Heart left ventricle (tissue), 16 donors: ENCODE measurements at regions of chr3 and their contacts with region 1.

Region 1: GRCh38 chr3:50687127-50687751 is 12.5 kb downstream of the DOCK3 start:
- DNase-seq: peak in 1 of 5 donors; percentile 42
- ATAC-seq: peak; percentile 89 to 95 (median 92)
- H3K4me3 ChIP-seq: no peak overlapping the region
- H3K27ac ChIP-seq: peak overlapping the region in 8 of 12 donors; percentile 4 to 65 (median 44)
- H3K4me1 ChIP-seq: peaks cover 0 to 8% (median 0%) of the 10 kb centered on the region in 12 donors
- H3K27me3 ChIP-seq: peaks cover 0 to 13% (median 0%) of the 10 kb centered on the region in 9 donors
- CTCF ChIP-seq: no peak
- POLR2A ChIP-seq: no peak

Region 2: DNA sequence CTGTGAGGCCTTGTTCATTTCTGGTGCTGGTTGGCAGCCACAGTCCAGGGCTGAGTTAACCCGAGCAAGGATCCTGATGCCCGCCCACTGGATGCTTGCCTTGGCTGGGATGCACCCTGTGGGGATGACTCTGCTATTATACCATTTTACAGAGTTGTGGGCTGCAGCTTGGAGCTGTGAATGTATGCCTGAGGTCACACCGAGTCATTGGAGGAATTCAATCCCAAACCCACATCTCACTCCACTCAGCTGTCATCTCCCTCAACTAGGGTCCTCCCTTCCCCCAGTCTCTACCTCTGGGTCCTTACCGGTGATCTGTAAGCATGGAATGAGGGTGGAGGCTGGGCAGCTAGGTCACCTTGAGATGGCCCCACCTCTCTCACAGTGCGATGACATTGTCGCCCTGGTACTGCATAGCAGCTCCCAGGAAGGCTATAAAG is 48.2 kb before region 1 on chr3:
- intact Hi-C with region 1: loop called in 1 of 10 experiments (anchors 5 kb)
- DNase-seq: no peak
- ATAC-seq: peak; percentile 32 to 47 (median 40)
- H3K4me3 ChIP-seq: no peak overlapping the region
- H3K27ac ChIP-seq: peak overlapping the region in 11 of 12 donors; percentile 28 to 77 (median 65)
- H3K4me1 ChIP-seq: peaks cover 0 to 72% (median 38%) of the 10 kb centered on the region in 12 donors
- H3K27me3 ChIP-seq: no peaks in the 10 kb centered on the region
- CTCF ChIP-seq: no peak
- POLR2A ChIP-seq: no peak

Region 3: GRCh38 chr3:51568036-51568435 is 880.8 kb after region 1 on chr3:
- intact Hi-C with region 1: no loop called
- DNase-seq: no peak
- ATAC-seq: peak in 2 of 4 donors; percentile 42 to 75
- H3K4me3 ChIP-seq: no peak overlapping the region
- H3K27ac ChIP-seq: peak overlapping the region in 3 of 12 donors; percentile 17 to 38 (median 30)
- H3K4me1 ChIP-seq: peaks cover 0 to 40% (median 20%) of the 10 kb centered on the region in 12 donors
- H3K27me3 ChIP-seq: no peaks in the 10 kb centered on the region
- CTCF ChIP-seq: no peak
- POLR2A ChIP-seq: no peak